Aorta (tissue), 5 donors: ENCODE measurements at regions of chr1 and their contacts with region 1.

Region 1: DNA sequence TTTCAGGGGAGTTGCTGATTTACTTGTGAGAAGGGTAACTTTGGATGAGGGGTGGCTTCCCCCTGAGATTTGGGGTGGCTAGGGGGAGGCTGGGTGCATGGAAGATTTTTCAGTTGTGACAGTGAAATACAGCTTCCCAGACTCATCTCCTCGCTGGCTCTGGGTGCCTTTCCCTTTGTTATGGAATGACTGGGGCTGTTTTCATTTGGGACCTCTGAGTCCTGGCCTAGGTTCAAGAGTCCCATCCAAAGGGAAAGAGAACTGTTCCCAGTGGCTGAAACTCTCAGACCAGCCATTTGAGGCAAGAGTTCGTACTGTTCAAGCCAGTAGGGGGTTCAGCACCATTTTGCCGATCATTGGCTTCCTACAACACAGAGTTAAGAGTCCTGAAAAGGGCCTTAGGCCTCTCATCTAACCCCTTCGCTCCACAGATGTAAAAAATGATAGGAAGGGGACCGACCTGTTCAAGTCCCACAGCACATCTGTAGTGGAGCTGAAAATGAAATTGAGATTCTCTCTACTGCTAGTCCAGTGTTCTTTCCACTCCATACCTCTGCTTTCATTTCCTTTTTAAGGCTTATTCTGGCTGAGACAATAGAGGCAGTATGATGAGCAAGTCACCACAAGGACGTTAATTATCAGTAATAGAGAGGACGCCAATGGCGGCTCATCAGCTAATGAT is 958 bp downstream of the DDR2 start:
- DNase-seq: no peak
- ATAC-seq: peak; percentile 55
- H3K4me3 ChIP-seq: peak overlapping the region; percentile 66 to 99
- H3K27ac ChIP-seq: peak overlapping the region; percentile 22 to 95
- H3K4me1 ChIP-seq: peaks cover 12 to 17% of the 10 kb centered on the region in 2 donors
- H3K27me3 ChIP-seq: no peaks in the 10 kb centered on the region

Region 2: GRCh38 chr1:162670928-162671663 is 37.9 kb after region 1 on chr1:
- intact Hi-C with region 1: loop called in 1 of 2 experiments (anchors 5 kb)
- DNase-seq: no peak
- ATAC-seq: peak; percentile 69
- H3K4me3 ChIP-seq: no peak overlapping the region
- H3K27ac ChIP-seq: peak overlapping the region; percentile 1 to 73
- H3K4me1 ChIP-seq: peaks cover 5 to 12% of the 10 kb centered on the region in 2 donors
- H3K27me3 ChIP-seq: no peaks in the 10 kb centered on the region

Region 3: DNA sequence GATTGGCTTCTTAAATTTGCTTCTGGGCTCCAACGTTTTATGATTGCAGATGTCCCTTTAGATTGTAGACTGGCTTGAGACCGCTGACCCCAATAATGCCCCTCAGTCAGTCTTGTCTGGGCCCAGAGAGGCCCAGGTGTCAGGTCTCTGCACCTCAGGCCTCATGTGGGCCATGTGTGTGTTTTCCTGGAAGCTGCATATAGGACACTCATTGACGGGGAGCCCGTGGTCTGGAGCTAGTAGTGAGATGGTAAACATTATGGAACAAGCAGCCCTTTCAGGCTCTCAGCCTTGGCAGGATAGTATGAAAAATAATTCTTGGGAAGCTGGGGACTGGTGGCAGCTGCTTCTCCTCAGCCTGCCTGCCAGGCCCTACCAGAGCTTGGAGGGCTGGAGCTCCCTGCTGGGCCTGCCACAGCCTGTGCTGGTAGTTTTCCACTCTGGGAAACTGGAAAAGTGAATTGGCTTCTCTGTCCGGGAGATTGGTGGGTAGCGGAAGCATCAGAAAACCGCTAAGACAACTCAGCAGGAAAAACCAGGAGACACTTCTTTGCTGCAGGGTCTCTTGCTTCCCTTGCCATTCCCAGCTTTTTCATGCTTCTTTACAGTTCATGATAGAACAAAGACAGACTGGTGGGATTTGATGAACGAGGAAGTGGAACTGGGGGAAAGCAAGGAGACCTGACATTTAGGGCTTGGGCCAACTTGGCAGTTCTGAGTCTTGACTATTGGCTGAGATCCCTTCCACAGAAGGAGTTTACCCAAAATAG is 99.5 kb after region 1 on chr1:
- intact Hi-C with region 1: loop called in 1 of 2 experiments (anchors 5 kb)
- DNase-seq: peak in 1 of 2 donors; percentile 65
- ATAC-seq: peak; percentile 84
- H3K4me3 ChIP-seq: no peak overlapping the region
- H3K27ac ChIP-seq: peak overlapping the region; percentile 81 to 95
- H3K4me1 ChIP-seq: peaks cover 2 to 23% of the 10 kb centered on the region in 2 donors
- H3K27me3 ChIP-seq: no peaks in the 10 kb centered on the region